Activated B cell treated with CpG ODN at 0.5 μM for 24 hours (primary cell): ENCODE measurements at regions of chr1 and their contacts with region 1.

Region 1: GRCh38 chr1:107840725-107841124 is 124.3 kb downstream of the VAV3 start:
- DNase-seq: no peak
- ATAC-seq: peak; percentile 46
- H3K4me3 Mint-ChIP-seq: peak overlapping the region; percentile 67
- H3K27ac Mint-ChIP-seq: peak overlapping the region; percentile 75
- H3K4me1 Mint-ChIP-seq: peaks cover 89% of the 10 kb centered on the region
- H3K27me3 Mint-ChIP-seq: no peaks in the 10 kb centered on the region
- CTCF ChIP-seq: no peak

Region 2: GRCh38 chr1:107688354-107688753 is 152.4 kb before region 1 on chr1:
- CTCF ChIA-PET with region 1: no interaction called
- POLR2A ChIA-PET with region 1: no interaction called
- intact Hi-C with region 1: no loop called
- DNase-seq: no peak
- ATAC-seq: no peak
- H3K4me3 Mint-ChIP-seq: no peak overlapping the region
- H3K27ac Mint-ChIP-seq: no peak overlapping the region
- H3K4me1 Mint-ChIP-seq: no peaks in the 10 kb centered on the region
- H3K27me3 Mint-ChIP-seq: no peaks in the 10 kb centered on the region
- CTCF ChIP-seq: no peak

Region 3: DNA sequence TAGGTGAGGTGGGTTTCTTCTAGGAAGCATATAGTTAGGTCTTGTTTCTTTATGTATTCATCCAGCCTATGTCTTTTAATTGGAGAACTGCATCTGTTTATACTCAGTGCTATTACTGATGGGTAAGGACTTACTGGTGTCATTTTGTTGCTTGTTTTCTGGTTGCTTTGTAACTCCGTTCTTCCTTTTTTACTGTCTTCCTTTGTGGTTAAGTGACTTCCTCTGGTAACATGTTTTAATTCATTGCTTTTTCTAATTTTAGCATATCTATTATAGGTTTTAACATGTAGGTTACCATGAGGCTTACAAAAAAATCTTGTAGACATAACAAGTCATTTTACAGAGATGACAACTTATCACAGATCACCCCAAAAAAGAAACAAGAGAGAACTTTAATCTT is 36.6 kb before region 1 on chr1:
- CTCF ChIA-PET with region 1: no interaction called
- POLR2A ChIA-PET with region 1: no interaction called
- intact Hi-C with region 1: loop called (anchors 1 kb)
- DNase-seq: no peak
- ATAC-seq: peak; percentile 35
- H3K4me3 Mint-ChIP-seq: peak overlapping the region; percentile 80
- H3K27ac Mint-ChIP-seq: peak overlapping the region; percentile 96
- H3K4me1 Mint-ChIP-seq: peaks cover 94% of the 10 kb centered on the region
- H3K27me3 Mint-ChIP-seq: no peaks in the 10 kb centered on the region
- CTCF ChIP-seq: no peak

Region 4: DNA sequence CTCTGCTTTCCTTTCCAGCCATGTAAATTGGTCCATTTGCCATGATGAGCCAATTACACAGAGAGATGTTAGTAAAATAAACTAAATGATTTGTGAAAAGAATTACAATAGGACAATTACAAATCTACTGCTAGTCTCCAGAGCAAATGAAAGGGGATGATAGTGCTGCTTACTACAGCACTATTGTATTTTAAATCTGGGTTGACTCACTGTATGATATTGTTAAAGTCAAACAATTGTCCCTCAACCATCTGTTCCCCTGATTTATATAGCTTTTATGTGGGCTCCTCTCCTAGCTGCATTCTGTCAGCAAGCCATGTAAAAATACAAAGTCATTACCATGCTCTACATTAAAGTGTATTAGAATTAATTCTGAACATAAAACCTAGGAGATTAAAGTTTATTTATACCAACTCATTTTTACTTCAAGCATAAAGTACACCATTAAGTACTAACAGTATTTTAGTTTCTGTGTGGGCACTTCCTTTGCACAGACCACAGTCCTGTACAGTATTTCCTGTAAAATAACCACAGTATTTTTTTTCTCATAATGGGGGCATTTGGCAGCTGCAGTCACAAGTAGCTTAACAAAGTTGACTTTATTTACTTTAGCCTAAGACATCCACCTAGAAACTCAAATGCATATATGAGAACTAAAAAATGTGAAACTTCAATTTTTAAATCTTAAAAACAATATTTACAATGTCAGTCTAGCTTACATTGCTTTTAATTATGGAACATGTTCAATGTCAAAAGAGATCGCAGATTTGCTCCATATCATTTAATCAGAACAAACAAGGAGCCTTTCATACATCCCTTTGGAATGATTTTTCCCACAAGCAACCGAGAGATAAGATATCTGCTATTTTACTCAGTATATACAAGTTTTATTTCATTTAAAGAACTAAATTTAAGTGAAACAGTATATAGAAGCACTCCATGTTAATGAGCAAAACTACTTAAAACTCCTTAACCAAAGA is 11.4 kb before region 1 on chr1:
- CTCF ChIA-PET with region 1: no interaction called
- POLR2A ChIA-PET with region 1: interaction called, 8 read pairs
- intact Hi-C with region 1: loop called (anchors 1 kb)
- DNase-seq: no peak
- ATAC-seq: peak; percentile 80
- H3K4me3 Mint-ChIP-seq: peak overlapping the region; percentile 65
- H3K27ac Mint-ChIP-seq: peak overlapping the region; percentile 89
- H3K4me1 Mint-ChIP-seq: peaks cover 89% of the 10 kb centered on the region
- H3K27me3 Mint-ChIP-seq: no peaks in the 10 kb centered on the region
- CTCF ChIP-seq: no peak

Region 5: DNA sequence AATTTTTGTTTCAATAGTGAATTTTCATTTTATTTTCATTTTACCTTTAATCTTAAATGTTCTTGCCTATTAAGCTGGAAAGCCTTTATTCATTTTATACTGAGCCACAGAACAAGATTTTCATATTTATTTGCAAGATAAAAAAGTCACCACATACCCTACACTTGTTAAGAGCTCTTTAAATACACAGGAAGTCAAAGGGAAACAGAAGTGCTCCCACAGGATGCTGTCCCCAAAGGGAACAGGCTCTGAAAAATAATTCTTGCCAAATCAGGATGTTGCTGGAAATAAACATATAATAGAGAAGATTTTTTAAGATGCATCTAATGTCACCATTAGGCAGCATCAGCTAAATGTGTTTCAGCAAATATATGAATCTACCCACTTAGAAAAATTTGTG is 10.7 kb after region 1 on chr1:
- CTCF ChIA-PET with region 1: no interaction called
- POLR2A ChIA-PET with region 1: no interaction called
- intact Hi-C with region 1: loop called (anchors 1 kb)
- DNase-seq: no peak
- ATAC-seq: no peak
- H3K4me3 Mint-ChIP-seq: no peak overlapping the region
- H3K27ac Mint-ChIP-seq: no peak overlapping the region
- H3K4me1 Mint-ChIP-seq: peaks cover 72% of the 10 kb centered on the region
- H3K27me3 Mint-ChIP-seq: no peaks in the 10 kb centered on the region
- CTCF ChIP-seq: no peak

Region 6: DNA sequence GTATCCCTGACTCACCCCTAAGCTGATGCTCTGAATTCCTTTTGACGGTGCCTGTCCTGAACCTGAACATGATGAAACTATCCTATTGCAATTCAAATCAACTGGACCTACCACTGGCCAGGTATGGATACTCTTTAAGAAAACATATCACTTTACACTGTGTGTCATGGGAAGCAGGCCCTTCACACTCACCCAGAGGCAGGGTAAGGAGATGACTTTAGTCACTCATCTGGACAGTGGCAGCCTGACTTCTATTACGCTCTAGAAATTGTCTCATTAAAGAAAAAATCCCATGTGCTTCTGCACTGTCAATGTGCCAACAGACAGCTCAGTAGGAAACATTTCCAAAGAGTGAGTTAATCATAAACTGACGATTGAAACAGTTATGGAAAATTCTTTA is 30.0 kb after region 1 on chr1:
- CTCF ChIA-PET with region 1: no interaction called
- POLR2A ChIA-PET with region 1: interaction called, 14 read pairs
- intact Hi-C with region 1: loop called (anchors 2 kb)
- DNase-seq: no peak
- ATAC-seq: no peak
- H3K4me3 Mint-ChIP-seq: peak overlapping the region; percentile 2
- H3K27ac Mint-ChIP-seq: peak overlapping the region; percentile 90
- H3K4me1 Mint-ChIP-seq: peaks cover 93% of the 10 kb centered on the region
- H3K27me3 Mint-ChIP-seq: no peaks in the 10 kb centered on the region
- CTCF ChIP-seq: no peak

Region 7: DNA sequence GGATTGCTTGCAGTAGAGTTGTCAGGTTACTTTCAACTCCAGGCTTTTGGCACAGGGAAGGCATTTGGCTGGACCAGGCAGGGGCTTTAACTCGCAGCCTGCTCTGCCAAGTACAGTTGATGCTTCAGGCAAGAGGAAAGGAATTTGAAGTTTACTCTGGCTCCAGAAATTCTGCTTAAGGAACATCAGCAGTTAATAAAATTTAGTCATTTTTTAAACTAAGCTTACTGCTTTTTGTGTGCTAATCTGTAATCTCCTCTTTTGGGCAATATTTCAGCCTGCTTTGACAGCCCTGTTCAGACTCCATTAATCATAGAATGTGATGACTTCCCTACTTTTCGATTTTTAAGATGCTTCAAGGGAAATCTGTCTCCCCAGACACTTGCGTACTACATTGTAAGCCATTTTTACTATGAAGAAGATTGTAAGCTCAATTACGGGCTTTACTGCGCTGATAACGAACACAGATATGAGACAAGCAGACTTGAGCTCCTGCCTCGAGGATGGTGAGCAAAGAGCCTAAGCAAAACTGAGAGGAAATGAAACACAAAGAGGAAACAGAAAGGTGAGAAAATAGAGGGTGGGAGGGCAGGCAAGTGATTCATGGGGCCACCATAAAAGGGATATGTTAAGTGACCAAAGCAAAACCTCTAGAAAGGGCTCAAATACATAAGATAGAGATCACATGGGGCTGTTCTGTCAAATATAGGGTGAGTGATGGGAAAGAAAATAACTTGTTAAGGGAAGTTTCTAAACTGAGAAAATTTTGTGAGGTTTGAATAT is 200.8 kb after region 1 on chr1:
- CTCF ChIA-PET with region 1: no interaction called
- POLR2A ChIA-PET with region 1: interaction called, 3 read pairs
- intact Hi-C with region 1: loop called (anchors 5 kb)
- DNase-seq: no peak
- ATAC-seq: peak; percentile 54
- H3K4me3 Mint-ChIP-seq: peak overlapping the region; percentile 55
- H3K27ac Mint-ChIP-seq: peak overlapping the region; percentile 82
- H3K4me1 Mint-ChIP-seq: peaks cover 39% of the 10 kb centered on the region
- H3K27me3 Mint-ChIP-seq: no peaks in the 10 kb centered on the region
- CTCF ChIP-seq: no peak